ENCODE measurements at regions of chr2 and their contacts with region 1.

Region 1: GRCh38 chr2:218395797-218396687 is 3.6 kb upstream of the CTDSP1 start:
- DNase-seq: peak; percentile 97
- ATAC-seq: peak; percentile 41
- H3K4me3 ChIP-seq: peak overlapping the region; percentile 80
- H3K27ac ChIP-seq: peak overlapping the region; percentile 93
- H3K4me1 ChIP-seq: peaks cover 33% of the 10 kb centered on the region
- H3K27me3 ChIP-seq: no peaks in the 10 kb centered on the region
- CTCF ChIP-seq: peak; percentile 87

Region 2: GRCh38 chr2:218269899-218270720 is 125.9 kb before region 1 on chr2 and contains the starts of genes AAMP and PNKD:
- CTCF ChIA-PET with region 1: interaction called, 16 read pairs
- POLR2A ChIA-PET with region 1: no interaction called
- intact Hi-C with region 1: loop called (anchors 1 kb)
- DNase-seq: peak; percentile 99
- ATAC-seq: peak; percentile 87
- H3K4me3 ChIP-seq: peak within 1 kb of the TSS; percentile 90
- H3K27ac ChIP-seq: 0 out of 2 replicates have a peak within 1 kb of the TSS, but pooled peaks have one; percentile 2
- H3K4me1 ChIP-seq: peaks cover 19% of the 10 kb centered on the region
- H3K27me3 ChIP-seq: no peaks in the 10 kb centered on the region
- CTCF ChIP-seq: 0 out of 2 replicates have a peak, but pooled peaks have one; percentile 12
- total RNA-seq, gene AAMP: 272 and 312 TPM in 2 replicates
- total RNA-seq, gene PNKD: 95.5 and 97.7 TPM in 2 replicates

Region 3: GRCh38 chr2:218301176-218301819 is 94.7 kb before region 1 on chr2:
- CTCF ChIA-PET with region 1: no interaction called
- POLR2A ChIA-PET with region 1: no interaction called
- intact Hi-C with region 1: loop called (anchors 1 kb)
- DNase-seq: peak; percentile 96
- ATAC-seq: peak; percentile 94
- H3K4me3 ChIP-seq: no peak overlapping the region
- H3K27ac ChIP-seq: no peak overlapping the region
- H3K4me1 ChIP-seq: no peaks in the 10 kb centered on the region
- H3K27me3 ChIP-seq: no peaks in the 10 kb centered on the region
- CTCF ChIP-seq: peak; percentile 93

Region 4: GRCh38 chr2:218319813-218320365 is 76.2 kb before region 1 on chr2:
- CTCF ChIA-PET with region 1: no interaction called
- POLR2A ChIA-PET with region 1: no interaction called
- intact Hi-C with region 1: no loop called
- DNase-seq: no peak
- ATAC-seq: no peak
- H3K4me3 ChIP-seq: no peak overlapping the region
- H3K27ac ChIP-seq: no peak overlapping the region
- H3K4me1 ChIP-seq: peaks cover 10% of the 10 kb centered on the region
- H3K27me3 ChIP-seq: no peaks in the 10 kb centered on the region
- CTCF ChIP-seq: no peak

Region 5: GRCh38 chr2:218360447-218360846 is 35.6 kb before region 1 on chr2:
- CTCF ChIA-PET with region 1: no interaction called
- POLR2A ChIA-PET with region 1: no interaction called
- intact Hi-C with region 1: loop called (anchors 1 kb)
- DNase-seq: no peak
- ATAC-seq: no peak
- H3K4me3 ChIP-seq: no peak overlapping the region
- H3K27ac ChIP-seq: no peak overlapping the region
- H3K4me1 ChIP-seq: no peaks in the 10 kb centered on the region
- H3K27me3 ChIP-seq: no peaks in the 10 kb centered on the region
- CTCF ChIP-seq: no peak

Region 6: GRCh38 chr2:218438601-218438995 is 42.6 kb after region 1 on chr2:
- CTCF ChIA-PET with region 1: no interaction called
- POLR2A ChIA-PET with region 1: no interaction called
- intact Hi-C with region 1: no loop called
- DNase-seq: no peak
- ATAC-seq: no peak
- H3K4me3 ChIP-seq: no peak overlapping the region
- H3K27ac ChIP-seq: no peak overlapping the region
- H3K4me1 ChIP-seq: no peaks in the 10 kb centered on the region
- H3K27me3 ChIP-seq: no peaks in the 10 kb centered on the region
- CTCF ChIP-seq: no peak